ENCODE measurements at regions of chr11 and their contacts with region 1.

Region 1: GRCh38 chr11:87290304-87290922 is 252.7 kb downstream of the TMEM135 start:
- DNase-seq: peak; percentile 91
- H3K4me3 ChIP-seq: no peak overlapping the region
- H3K27ac ChIP-seq: peak overlapping the region; percentile 30
- H3K4me1 ChIP-seq: peaks cover 28% of the 10 kb centered on the region
- H3K27me3 ChIP-seq: no peaks in the 10 kb centered on the region
- CTCF ChIP-seq: peak; percentile 80

Region 2: GRCh38 chr11:86869966-86870570 is 420.3 kb before region 1 on chr11:
- CTCF ChIA-PET with region 1: no interaction called
- POLR2A ChIA-PET with region 1: no interaction called
- intact Hi-C with region 1: loop called (anchors 5 kb)
- DNase-seq: peak; percentile 87
- H3K4me3 ChIP-seq: no peak overlapping the region
- H3K27ac ChIP-seq: no peak overlapping the region
- H3K4me1 ChIP-seq: peaks cover 23% of the 10 kb centered on the region
- H3K27me3 ChIP-seq: no peaks in the 10 kb centered on the region
- CTCF ChIP-seq: peak; percentile 95

Region 3: GRCh38 chr11:86938900-86939880 is 351.2 kb before region 1 on chr11:
- CTCF ChIA-PET with region 1: interaction called, 4 read pairs
- POLR2A ChIA-PET with region 1: no interaction called
- intact Hi-C with region 1: loop called (anchors 1 kb)
- DNase-seq: peak; percentile 90
- H3K4me3 ChIP-seq: peak overlapping the region; percentile 19
- H3K27ac ChIP-seq: peak overlapping the region; percentile 97
- H3K4me1 ChIP-seq: peaks cover 85% of the 10 kb centered on the region
- H3K27me3 ChIP-seq: no peaks in the 10 kb centered on the region
- CTCF ChIP-seq: peak; percentile 76

Region 4: GRCh38 chr11:86990515-86990914 is 299.9 kb before region 1 on chr11:
- CTCF ChIA-PET with region 1: no interaction called
- POLR2A ChIA-PET with region 1: no interaction called
- intact Hi-C with region 1: loop called (anchors 5 kb)
- DNase-seq: peak; percentile 90
- H3K4me3 ChIP-seq: peak overlapping the region; percentile 25
- H3K27ac ChIP-seq: peak overlapping the region; percentile 88
- H3K4me1 ChIP-seq: peaks cover 81% of the 10 kb centered on the region
- H3K27me3 ChIP-seq: no peaks in the 10 kb centered on the region
- CTCF ChIP-seq: no peak

Measured in A673 (cell line).